Mammary epithelial cell (primary cell): ENCODE measurements at regions of chr2 and their contacts with region 1.

Region 1: GRCh38 chr2:64943387-64944150 is 45.6 kb upstream of the SLC1A4 start:
- DNase-seq: peak; percentile 84
- H3K4me3 ChIP-seq: no peak overlapping the region
- H3K27ac ChIP-seq: no peak overlapping the region
- H3K4me1 ChIP-seq: peaks cover 14% of the 10 kb centered on the region
- H3K27me3 ChIP-seq: no peaks in the 10 kb centered on the region
- CTCF ChIP-seq: no peak

Region 2: DNA sequence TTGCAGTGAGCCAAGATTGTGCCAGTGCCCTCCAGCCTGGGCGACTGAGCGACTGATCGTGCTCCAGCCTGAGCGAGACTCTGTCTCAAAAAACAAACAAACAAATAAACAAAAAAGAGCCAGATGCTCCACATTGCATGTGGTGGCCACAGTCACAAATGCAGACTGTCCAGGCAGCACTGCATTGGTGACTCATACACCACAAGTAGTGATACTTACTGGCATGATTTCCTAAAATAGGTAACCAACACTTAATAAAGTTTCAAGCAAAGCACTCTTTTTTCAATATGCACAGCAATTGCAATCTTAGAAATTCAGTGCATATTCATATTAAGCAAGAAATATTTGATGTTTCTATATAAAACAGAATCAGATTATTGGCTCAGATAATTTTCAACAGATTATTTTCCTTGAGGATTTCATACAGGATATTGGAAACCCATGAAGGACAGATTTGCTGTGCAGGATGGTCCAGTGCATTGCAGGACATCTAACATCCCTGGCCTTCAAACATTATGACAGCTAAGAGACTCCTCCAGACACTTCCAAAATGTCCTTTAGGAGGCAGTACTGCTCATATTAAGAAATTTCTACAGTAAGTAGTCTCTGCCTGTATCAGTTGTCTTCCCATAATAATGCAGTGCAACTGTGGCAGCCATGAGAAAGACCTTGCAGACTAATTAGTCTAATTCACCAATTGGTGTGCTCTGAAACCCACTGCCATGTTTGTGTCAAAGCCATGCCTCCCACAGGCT is 35.1 kb after region 1 on chr2:
- CTCF ChIA-PET with region 1: no interaction called
- dilution Hi-C with region 1: no loop called
- in situ Hi-C with region 1: loop called in 1 of 2 experiments (anchors 5 kb)
- intact Hi-C with region 1: no loop called
- DNase-seq: peak; percentile 58
- H3K4me3 ChIP-seq: no peak overlapping the region
- H3K27ac ChIP-seq: no peak overlapping the region
- H3K4me1 ChIP-seq: peaks cover 35% of the 10 kb centered on the region
- H3K27me3 ChIP-seq: no peaks in the 10 kb centered on the region
- CTCF ChIP-seq: peak in 1 of 2 donors; percentile 27

Region 3: GRCh38 chr2:64988420-64989125 is 45.0 kb after region 1 on chr2:
- CTCF ChIA-PET with region 1: no interaction called
- dilution Hi-C with region 1: no loop called
- in situ Hi-C with region 1: no loop called
- intact Hi-C with region 1: loop called (anchors 2 kb)
- DNase-seq: peak; percentile 83
- H3K4me3 ChIP-seq: peak overlapping the region; percentile 59 to 69 (median 63)
- H3K27ac ChIP-seq: peak overlapping the region; percentile 40
- H3K4me1 ChIP-seq: peaks cover 19% of the 10 kb centered on the region
- H3K27me3 ChIP-seq: no peaks in the 10 kb centered on the region
- CTCF ChIP-seq: peak; percentile 4 to 47